ENCODE measurements at regions of chr17 and their contacts with region 1.

Region 1: GRCh38 chr17:29807520-29808351 is 122.3 kb downstream of the SSH2 start:
- DNase-seq: peak; percentile 67
- H3K4me3 ChIP-seq: no peak overlapping the region; a peak in 1 of 4 replicates
- H3K27ac ChIP-seq: peak overlapping the region in 1 of 2 experiments; percentile 61; a peak in 2 of 4 replicates
- H3K4me1 ChIP-seq: peaks cover 3 to 10% of the 10 kb centered on the region in 2 experiments; a peak in 3 of 4 replicates
- H3K27me3 ChIP-seq: no peaks in the 10 kb centered on the region
- CTCF ChIP-seq: peak; percentile 85
- EP300 ChIP-seq: no peak
- RAD21 ChIP-seq: peak; percentile 93

Region 2: GRCh38 chr17:29640413-29640812 is 167.3 kb before region 1 on chr17:
- CTCF ChIA-PET with region 1: interaction called, 11 read pairs
- POLR2A ChIA-PET with region 1: no interaction called
- DNase-seq: no peak
- H3K4me3 ChIP-seq: no peak overlapping the region
- H3K27ac ChIP-seq: peak overlapping the region; percentile 52 to 89
- H3K4me1 ChIP-seq: peaks cover 54% of the 10 kb centered on the region in 2 experiments; a peak in 3 of 4 replicates
- H3K27me3 ChIP-seq: no peaks in the 10 kb centered on the region
- CTCF ChIP-seq: no peak
- EP300 ChIP-seq: no peak
- RAD21 ChIP-seq: no peak

Region 3: DNA sequence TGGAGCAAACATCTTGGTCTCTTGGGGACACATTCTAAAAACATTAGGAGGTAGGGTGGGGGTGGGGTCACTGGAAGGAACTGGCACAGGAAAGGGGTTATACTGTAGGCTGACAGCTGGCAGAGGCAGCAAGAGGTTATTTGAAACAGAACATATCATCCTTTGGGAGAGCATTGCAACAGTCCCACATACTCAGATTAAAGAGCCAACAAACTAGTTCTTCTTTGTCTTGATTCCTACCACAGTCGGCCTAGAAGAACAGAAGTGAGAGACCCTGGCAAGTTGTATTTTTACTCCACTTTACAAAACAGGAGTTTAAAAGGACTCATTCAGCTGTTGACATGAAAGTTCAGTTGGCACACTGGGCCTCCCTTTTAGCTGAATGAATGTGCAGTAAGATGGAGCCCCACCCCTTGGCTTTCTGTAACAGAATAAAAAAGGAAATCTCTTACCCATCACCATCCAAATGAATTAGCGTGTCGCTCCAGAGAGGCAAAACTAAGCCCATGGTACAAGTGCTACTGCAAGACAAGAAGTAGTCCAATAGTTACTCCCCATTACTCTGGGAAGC is 130.4 kb before region 1 on chr17:
- CTCF ChIA-PET with region 1: no interaction called
- POLR2A ChIA-PET with region 1: no interaction called
- DNase-seq: no peak
- H3K4me3 ChIP-seq: no peak overlapping the region
- H3K27ac ChIP-seq: peak overlapping the region in 1 of 2 experiments; percentile 31; a peak in 1 of 4 replicates
- H3K4me1 ChIP-seq: peaks cover 3 to 5% of the 10 kb centered on the region in 2 experiments; a peak in 3 of 4 replicates
- H3K27me3 ChIP-seq: no peaks in the 10 kb centered on the region
- CTCF ChIP-seq: no peak
- EP300 ChIP-seq: no peak
- RAD21 ChIP-seq: no peak

Region 4: GRCh38 chr17:29821897-29822296 is 14.2 kb after region 1 on chr17:
- CTCF ChIA-PET with region 1: interaction called, 18 read pairs
- POLR2A ChIA-PET with region 1: no interaction called
- DNase-seq: no peak
- H3K4me3 ChIP-seq: no peak overlapping the region
- H3K27ac ChIP-seq: no peak overlapping the region
- H3K4me1 ChIP-seq: no peaks in the 10 kb centered on the region
- H3K27me3 ChIP-seq: no peaks in the 10 kb centered on the region
- CTCF ChIP-seq: no peak
- EP300 ChIP-seq: no peak
- RAD21 ChIP-seq: no peak

Region 5: DNA sequence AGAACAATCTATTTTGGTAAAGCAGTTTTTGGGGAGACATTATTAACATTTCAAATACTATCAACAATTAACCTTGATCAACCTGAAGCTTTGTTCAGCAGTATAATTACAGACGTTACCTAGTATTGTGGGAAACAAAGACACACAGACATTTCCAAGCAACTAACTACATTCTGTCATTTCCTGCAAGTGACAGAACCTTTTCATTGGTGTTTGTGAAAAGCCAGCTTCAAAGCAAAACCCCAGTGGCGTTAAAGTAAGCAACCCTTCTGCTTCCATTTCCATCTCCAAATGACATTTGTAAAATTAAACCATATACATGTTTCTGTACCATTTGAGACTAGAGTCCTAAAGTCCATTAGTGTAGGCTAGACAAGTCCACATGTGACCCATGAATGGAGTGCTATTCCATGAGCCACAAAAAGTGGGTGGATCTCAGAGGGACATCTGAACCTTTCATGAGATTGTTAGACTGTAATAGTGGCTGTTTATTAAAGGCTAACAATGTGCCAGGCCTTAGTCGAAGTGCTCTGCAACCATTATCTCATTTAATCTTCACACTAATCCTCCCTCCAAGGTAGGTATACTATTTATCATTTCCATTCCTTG is 21.0 kb after region 1 on chr17:
- CTCF ChIA-PET with region 1: interaction called, 18 read pairs
- POLR2A ChIA-PET with region 1: no interaction called
- DNase-seq: no peak
- H3K4me3 ChIP-seq: no peak overlapping the region
- H3K27ac ChIP-seq: no peak overlapping the region
- H3K4me1 ChIP-seq: peaks cover 0 to 4% of the 10 kb centered on the region in 2 experiments; a peak in 1 of 4 replicates
- H3K27me3 ChIP-seq: no peaks in the 10 kb centered on the region
- CTCF ChIP-seq: no peak
- EP300 ChIP-seq: no peak
- RAD21 ChIP-seq: no peak

Region 6: DNA sequence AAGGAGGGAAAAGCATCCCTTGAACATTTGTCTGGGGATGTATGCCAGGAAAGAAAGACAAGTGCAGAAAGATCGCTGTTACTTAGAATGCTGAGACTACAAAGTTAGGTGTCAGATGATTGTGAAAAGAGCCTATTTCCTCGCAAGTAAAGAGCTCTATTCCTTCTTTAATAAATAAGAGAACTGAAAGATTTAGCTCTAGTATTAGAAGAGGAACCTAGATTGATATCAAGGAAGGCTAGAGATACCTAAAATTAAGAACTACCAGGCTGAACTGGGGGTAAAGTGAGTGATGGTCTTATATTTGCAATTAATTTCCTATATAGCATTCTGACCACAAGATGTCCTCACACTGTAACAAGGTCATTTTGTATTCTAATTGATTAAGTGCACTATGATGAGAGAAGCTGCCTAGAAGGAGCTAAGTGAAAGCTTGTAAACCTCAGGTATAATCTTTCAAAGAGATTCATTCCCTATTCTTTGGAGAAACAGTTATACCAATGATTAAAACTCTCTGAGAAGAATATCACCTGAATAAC is 60.0 kb after region 1 on chr17:
- CTCF ChIA-PET with region 1: interaction called, 17 read pairs
- POLR2A ChIA-PET with region 1: no interaction called
- DNase-seq: no peak
- H3K4me3 ChIP-seq: no peak overlapping the region
- H3K27ac ChIP-seq: no peak overlapping the region
- H3K4me1 ChIP-seq: peaks cover 5 to 8% of the 10 kb centered on the region in 2 experiments; a peak in 3 of 4 replicates
- H3K27me3 ChIP-seq: no peaks in the 10 kb centered on the region
- CTCF ChIP-seq: peak; percentile 50
- EP300 ChIP-seq: no peak
- RAD21 ChIP-seq: peak; percentile 54

Region 7: GRCh38 chr17:30021708-30022317 is 214.1 kb after region 1 on chr17:
- CTCF ChIA-PET with region 1: interaction called, 16 read pairs
- POLR2A ChIA-PET with region 1: no interaction called
- DNase-seq: peak; percentile 60
- H3K4me3 ChIP-seq: no peak overlapping the region
- H3K27ac ChIP-seq: no peak overlapping the region; a peak in 1 of 4 replicates
- H3K4me1 ChIP-seq: no peaks in the 10 kb centered on the region; a peak in 1 of 4 replicates
- H3K27me3 ChIP-seq: no peaks in the 10 kb centered on the region
- CTCF ChIP-seq: peak; percentile 88
- EP300 ChIP-seq: no peak
- RAD21 ChIP-seq: peak; percentile 76